Endothelial cell of umbilical vein (primary cell): ENCODE measurements at regions of chr15 and their contacts with region 1.

Region 1: DNA sequence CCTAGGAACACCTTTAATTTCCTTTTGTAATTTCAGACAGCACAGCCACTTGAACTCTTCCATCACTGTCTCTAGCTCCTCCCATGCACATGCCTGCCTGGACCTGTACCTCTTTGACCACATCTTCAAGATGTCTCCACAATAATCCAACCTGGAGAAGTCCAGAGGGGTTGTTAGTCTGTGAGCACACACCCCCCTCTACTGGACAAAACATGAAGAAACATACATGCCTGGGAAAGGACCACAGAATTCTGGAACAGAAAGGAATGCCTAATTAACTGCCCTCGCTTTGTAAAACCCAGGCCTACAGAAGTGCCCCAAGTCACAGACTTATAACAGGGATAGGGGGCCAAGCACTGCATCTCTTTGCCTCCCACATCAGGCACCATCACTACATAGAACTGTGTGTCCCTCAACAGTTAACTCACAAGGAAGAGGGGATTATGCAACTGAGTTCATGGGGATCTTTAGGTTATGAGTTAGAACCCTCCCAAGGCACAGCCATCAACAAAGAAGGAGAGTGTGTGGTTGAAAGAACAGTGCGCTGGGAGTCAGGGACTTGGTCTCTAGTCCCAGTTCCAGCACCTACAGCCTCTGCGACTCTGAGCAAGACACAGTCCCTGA is 61.7 kb downstream of the FMN1 start:
- DNase-seq: peak; percentile 68
- H3K4me3 ChIP-seq: no peak overlapping the region
- H3K27ac ChIP-seq: no peak overlapping the region
- H3K4me1 ChIP-seq: peaks cover 10% of the 10 kb centered on the region
- H3K27me3 ChIP-seq: peaks cover 5% of the 10 kb centered on the region in 2 experiments
- CTCF ChIP-seq: peak; percentile 68 to 78
- POLR2A ChIP-seq: no peak

Region 2: DNA sequence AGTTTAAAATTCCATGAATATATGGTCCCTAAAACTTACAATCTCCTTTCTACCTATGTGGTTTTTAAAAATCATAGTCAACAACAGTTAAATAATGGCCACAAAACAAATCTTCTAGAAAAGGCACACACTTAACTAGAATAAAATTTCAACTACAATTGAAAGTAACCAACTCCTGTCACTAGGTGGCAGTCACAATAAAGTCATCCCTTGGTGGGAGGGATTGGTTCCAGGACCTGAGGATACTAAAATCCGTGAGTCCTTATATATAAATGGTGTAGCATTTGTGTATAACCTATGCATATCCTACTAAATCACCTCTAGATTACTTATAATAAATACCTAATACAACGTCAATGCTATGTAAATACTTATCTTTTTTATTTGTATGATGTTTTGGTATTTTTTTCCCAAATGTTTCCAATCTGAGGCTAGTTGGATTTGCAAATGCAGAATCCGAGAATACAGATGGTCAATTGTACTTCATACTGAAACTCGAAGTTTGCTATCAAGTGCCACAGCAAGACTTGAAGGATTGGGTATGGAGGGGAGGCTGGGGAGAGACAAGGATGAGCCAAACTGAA is 110.9 kb before region 1 on chr15:
- CTCF ChIA-PET with region 1: interaction called, 111 read pairs
- POLR2A ChIA-PET with region 1: no interaction called
- dilution Hi-C with region 1: no loop called
- intact Hi-C with region 1: loop called (anchors 1 kb)
- DNase-seq: peak; percentile 71
- H3K4me3 ChIP-seq: no peak overlapping the region
- H3K27ac ChIP-seq: peak overlapping the region; percentile 60
- H3K4me1 ChIP-seq: peaks cover 10% of the 10 kb centered on the region
- H3K27me3 ChIP-seq: no peaks in the 10 kb centered on the region
- CTCF ChIP-seq: peak; percentile 45 to 51
- POLR2A ChIP-seq: no peak

Region 3: GRCh38 chr15:33098094-33099040 is 34.5 kb before region 1 on chr15:
- CTCF ChIA-PET with region 1: interaction called, 497 read pairs
- POLR2A ChIA-PET with region 1: no interaction called
- dilution Hi-C with region 1: no loop called
- intact Hi-C with region 1: no loop called
- DNase-seq: peak; percentile 54
- H3K4me3 ChIP-seq: no peak overlapping the region
- H3K27ac ChIP-seq: peak overlapping the region; percentile 25
- H3K4me1 ChIP-seq: peaks cover 11% of the 10 kb centered on the region
- H3K27me3 ChIP-seq: no peaks in the 10 kb centered on the region
- CTCF ChIP-seq: no peak
- POLR2A ChIP-seq: no peak

Region 4: GRCh38 chr15:33104212-33104611 is 28.6 kb before region 1 on chr15:
- CTCF ChIA-PET with region 1: interaction called, 21 read pairs
- POLR2A ChIA-PET with region 1: no interaction called
- dilution Hi-C with region 1: no loop called
- intact Hi-C with region 1: no loop called
- DNase-seq: peak; percentile 72
- H3K4me3 ChIP-seq: no peak overlapping the region
- H3K27ac ChIP-seq: no peak overlapping the region
- H3K4me1 ChIP-seq: peaks cover 3% of the 10 kb centered on the region
- H3K27me3 ChIP-seq: no peaks in the 10 kb centered on the region
- CTCF ChIP-seq: no peak
- POLR2A ChIP-seq: no peak